ENCODE measurements at regions of chr2 and their contacts with region 1.

Region 1: GRCh38 chr2:73736855-73737779 is at the start of gene TPRKB:
- DNase-seq: peak; percentile 94
- H3K4me3 Mint-ChIP-seq: peak within 1 kb of the TSS; percentile 97
- H3K27ac Mint-ChIP-seq: peak within 1 kb of the TSS; percentile 88
- H3K4me1 Mint-ChIP-seq: peaks cover 18% of the 10 kb centered on the region
- H3K27me3 Mint-ChIP-seq: peaks cover 3% of the 10 kb centered on the region
- total RNA-seq, gene TPRKB: 41.5 and 42.7 TPM in 2 replicates

Region 2: GRCh38 chr2:73284296-73285158 is 452.6 kb before region 1 on chr2 and contains the start of gene FBXO41:
- intact Hi-C with region 1: loop called (anchors 1 kb)
- DNase-seq: peak; percentile 68
- H3K4me3 Mint-ChIP-seq: peak within 1 kb of the TSS; percentile 84
- H3K27ac Mint-ChIP-seq: peak within 1 kb of the TSS; percentile 57
- H3K4me1 Mint-ChIP-seq: peaks cover 18% of the 10 kb centered on the region
- H3K27me3 Mint-ChIP-seq: peaks cover 15% of the 10 kb centered on the region
- total RNA-seq, gene FBXO41: 29.3 and 30.9 TPM in 2 replicates

Region 3: DNA sequence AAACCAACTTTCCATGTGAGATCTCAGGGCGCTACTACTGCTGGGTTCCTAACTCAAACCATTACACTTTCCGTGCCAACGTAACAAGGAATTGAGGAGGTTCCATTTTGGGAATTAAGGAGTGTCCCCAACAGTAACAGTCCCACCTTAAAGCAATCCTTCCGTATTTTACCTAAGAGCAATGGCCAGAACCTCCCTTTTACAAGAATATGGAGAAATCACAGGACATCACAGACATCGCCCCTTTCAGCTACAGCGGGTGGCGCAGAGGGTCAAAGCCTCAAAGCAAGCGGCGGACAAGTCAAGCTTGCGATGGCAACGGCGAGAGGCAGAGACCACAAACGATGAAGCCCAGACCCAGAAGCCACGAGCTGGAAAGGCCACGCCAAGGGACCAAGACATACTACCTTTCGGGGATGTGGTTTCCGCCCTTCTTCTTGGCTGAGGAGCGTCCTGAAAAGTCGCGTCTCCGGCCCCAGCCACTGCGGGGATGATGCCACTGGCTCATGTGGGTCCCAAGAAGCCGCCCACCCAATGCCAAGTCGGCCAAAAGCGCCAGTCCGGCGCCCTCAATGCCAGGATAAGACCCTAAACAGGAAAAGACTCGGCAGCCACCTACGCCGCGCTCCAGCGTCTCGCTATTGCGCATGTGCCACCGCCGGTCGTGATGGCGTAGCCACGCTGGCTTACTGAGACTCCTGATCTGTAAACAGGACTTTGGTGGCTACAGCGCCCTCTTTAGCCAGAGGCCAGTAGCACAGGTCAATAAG is 42.5 kb after region 1 on chr2 and contains the start of gene DUSP11:
- intact Hi-C with region 1: loop called (anchors 1 kb)
- DNase-seq: peak; percentile 94
- H3K4me3 Mint-ChIP-seq: peak within 1 kb of the TSS; percentile 99
- H3K27ac Mint-ChIP-seq: peak within 1 kb of the TSS; percentile 94
- H3K4me1 Mint-ChIP-seq: peaks cover 26% of the 10 kb centered on the region
- H3K27me3 Mint-ChIP-seq: no peaks in the 10 kb centered on the region
- total RNA-seq, gene DUSP11: 42.1 and 42.4 TPM in 2 replicates

Region 4: DNA sequence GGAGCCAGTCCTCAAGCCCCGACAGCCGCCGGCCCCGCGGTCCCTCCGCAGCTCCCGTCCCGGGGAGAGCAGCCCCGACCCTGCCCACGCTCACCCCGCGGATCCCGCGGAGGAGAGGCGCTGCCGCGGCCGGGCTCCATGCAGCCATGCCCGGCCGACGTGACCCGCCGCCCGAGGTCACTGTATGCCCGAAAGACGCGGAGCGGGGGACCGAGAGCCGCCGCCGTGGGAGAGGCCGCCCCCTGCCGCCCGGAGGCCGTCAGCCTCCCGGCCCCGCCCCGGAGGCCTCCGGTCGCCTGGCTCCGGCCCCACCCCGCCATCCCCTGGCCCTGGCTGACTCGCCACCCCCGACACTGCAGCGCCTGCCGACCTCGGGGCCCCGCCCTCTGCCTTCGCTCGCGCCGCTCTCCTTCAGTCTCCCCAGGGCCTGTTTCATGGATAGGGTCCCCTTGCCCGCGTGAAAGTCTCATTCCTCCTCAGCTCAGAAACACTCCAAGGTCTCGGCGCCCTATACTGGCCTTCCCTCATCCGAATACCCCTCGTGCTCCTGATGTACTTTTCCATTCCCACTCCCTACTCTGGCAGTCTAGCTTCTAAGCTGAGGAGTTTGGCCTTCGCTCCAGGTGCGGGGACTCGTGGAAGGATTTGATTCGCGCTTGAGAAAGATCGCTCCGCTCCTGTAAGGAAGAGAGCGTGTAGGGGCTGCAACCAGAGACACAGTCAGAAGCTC is 410.8 kb after region 1 on chr2 and contains the start of gene BOLA3:
- intact Hi-C with region 1: loop called (anchors 1 kb)
- DNase-seq: peak; percentile 82
- H3K4me3 Mint-ChIP-seq: no peak within 1 kb of the TSS
- H3K27ac Mint-ChIP-seq: no peak within 1 kb of the TSS
- H3K4me1 Mint-ChIP-seq: peaks cover under 1% of the 10 kb centered on the region
- H3K27me3 Mint-ChIP-seq: no peaks in the 10 kb centered on the region
- total RNA-seq, gene BOLA3: 94.2 and 98.2 TPM in 2 replicates

Region 5: GRCh38 chr2:74482801-74483674 is 745.9 kb after region 1 on chr2 and contains the starts of genes CCDC142 and TTC31:
- intact Hi-C with region 1: loop called (anchors 1 kb)
- DNase-seq: peak; percentile 89
- H3K4me3 Mint-ChIP-seq: peak within 1 kb of the TSS; percentile 99
- H3K27ac Mint-ChIP-seq: peak within 1 kb of the TSS; percentile 99
- H3K4me1 Mint-ChIP-seq: peaks cover 35% of the 10 kb centered on the region
- H3K27me3 Mint-ChIP-seq: no peaks in the 10 kb centered on the region
- total RNA-seq, gene CCDC142: 30.4 and 36.3 TPM in 2 replicates
- total RNA-seq, gene TTC31: 30.2 and 32.2 TPM in 2 replicates

Region 6: GRCh38 chr2:74553892-74554645 is 817.0 kb after region 1 on chr2 and contains the start of gene LOXL3:
- intact Hi-C with region 1: loop called (anchors 1 kb)
- DNase-seq: peak; percentile 77
- H3K4me3 Mint-ChIP-seq: peak within 1 kb of the TSS; percentile 95
- H3K27ac Mint-ChIP-seq: peak within 1 kb of the TSS; percentile 96
- H3K4me1 Mint-ChIP-seq: peaks cover 33% of the 10 kb centered on the region
- H3K27me3 Mint-ChIP-seq: peaks cover 11% of the 10 kb centered on the region
- total RNA-seq, gene LOXL3: 1.9 and 2.0 TPM in 2 replicates

Measured in activated T-helper 1 cell treated with anti-CD3 and anti-CD28 coated beads, Interleukin-12 subunit alpha, Interleukin-12 subunit beta, Interleukin-2, Interleukin-4 antibody, amounts not matched to agents 30 ng/mL and 10 ng/mL and 1 ng/mL, durations not matched to agents 14 hours and 24 hours and 36 hours (primary cell).